CD4-positive, alpha-beta memory T cell (primary cell): ENCODE measurements at regions of chr7 and their contacts with region 1.

Region 1: DNA sequence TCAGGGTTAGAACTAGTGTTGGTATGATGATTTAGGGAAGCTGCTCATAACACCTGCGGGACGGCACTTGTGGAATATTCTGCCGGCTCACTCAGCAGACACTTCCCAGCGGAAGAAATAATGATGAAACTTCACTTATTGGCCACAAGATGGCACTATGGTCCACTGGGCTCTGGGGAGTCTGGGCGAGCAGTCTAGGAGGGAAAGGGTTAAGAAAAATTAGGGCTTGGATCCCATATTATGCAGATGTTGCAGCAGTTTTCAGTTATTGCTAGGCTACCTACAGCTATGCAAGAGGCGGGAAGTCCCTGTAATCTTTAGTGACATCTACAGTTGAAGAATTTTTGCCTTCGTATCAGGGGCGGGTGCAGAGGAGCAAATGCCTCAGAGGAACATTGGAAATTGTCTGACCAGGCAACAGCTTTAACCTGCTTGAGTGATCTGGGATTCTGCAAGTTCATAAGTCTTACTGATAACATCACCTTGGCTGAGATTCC is 238.7 kb upstream of the PRSS58 start:
- DNase-seq: peak; percentile 33 to 46 (median 36)
- H3K4me3 ChIP-seq: no peak overlapping the region
- H3K4me3 Mint-ChIP-seq: peak overlapping the region; percentile 40 to 75 (median 66)
- H3K27ac ChIP-seq: no peak overlapping the region
- H3K27ac Mint-ChIP-seq: peak overlapping the region; percentile 39 to 86 (median 74)
- H3K4me1 ChIP-seq: peaks cover 30% of the 10 kb centered on the region
- H3K4me1 Mint-ChIP-seq: peaks cover 24 to 51% (median 30%) of the 10 kb centered on the region in 4 donors
- H3K27me3 ChIP-seq: no peaks in the 10 kb centered on the region
- H3K27me3 Mint-ChIP-seq: no peaks in the 10 kb centered on the region

Region 2: GRCh38 chr7:140902303-140902953 is 1594.2 kb before region 1 on chr7:
- CTCF ChIA-PET with region 1: no interaction called
- POLR2A ChIA-PET with region 1: no interaction called
- intact Hi-C with region 1: no loop called
- DNase-seq: peak in 4 of 5 donors; percentile 36 to 50 (median 42)
- H3K4me3 ChIP-seq: no peak overlapping the region
- H3K4me3 Mint-ChIP-seq: peak overlapping the region; percentile 43 to 70 (median 58)
- H3K27ac ChIP-seq: no peak overlapping the region
- H3K27ac Mint-ChIP-seq: peak overlapping the region; percentile 59 to 89 (median 81)
- H3K4me1 ChIP-seq: peaks cover 36% of the 10 kb centered on the region
- H3K4me1 Mint-ChIP-seq: peaks cover 32 to 75% (median 54%) of the 10 kb centered on the region in 4 donors
- H3K27me3 ChIP-seq: no peaks in the 10 kb centered on the region
- H3K27me3 Mint-ChIP-seq: no peaks in the 10 kb centered on the region

Region 3: DNA sequence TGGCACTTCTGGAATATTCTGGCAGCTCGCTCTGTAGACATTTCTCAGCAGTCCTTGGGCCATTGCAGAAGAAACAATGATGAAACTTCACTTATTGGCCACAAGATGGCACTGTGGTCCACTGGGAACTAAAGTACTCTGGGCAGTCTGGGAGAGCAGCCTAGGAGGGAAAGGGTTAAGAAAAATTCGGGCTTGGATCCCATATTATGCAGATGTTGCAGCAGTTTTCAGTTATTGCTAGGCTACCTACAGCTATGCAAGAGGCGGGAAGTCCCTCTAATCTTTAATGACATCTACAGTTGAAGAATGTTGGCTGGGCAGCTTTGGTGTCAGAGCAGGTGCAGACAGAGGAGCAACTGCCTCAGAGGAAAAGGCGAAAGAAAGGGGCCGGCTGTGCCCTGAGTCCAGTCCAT is 37.0 kb before region 1 on chr7:
- CTCF ChIA-PET with region 1: interaction called, 775 read pairs
- POLR2A ChIA-PET with region 1: interaction called, 6 read pairs
- intact Hi-C with region 1: loop called (anchors 1 kb)
- DNase-seq: peak in 4 of 5 donors; percentile 30 to 39 (median 34)
- H3K4me3 ChIP-seq: no peak overlapping the region
- H3K4me3 Mint-ChIP-seq: peak overlapping the region in 7 of 8 donors; percentile 2 to 69 (median 29)
- H3K27ac ChIP-seq: no peak overlapping the region
- H3K27ac Mint-ChIP-seq: peak overlapping the region in 6 of 7 donors; percentile 34 to 83 (median 58)
- H3K4me1 ChIP-seq: peaks cover 46% of the 10 kb centered on the region
- H3K4me1 Mint-ChIP-seq: peaks cover 35 to 68% (median 53%) of the 10 kb centered on the region in 4 donors
- H3K27me3 ChIP-seq: no peaks in the 10 kb centered on the region
- H3K27me3 Mint-ChIP-seq: no peaks in the 10 kb centered on the region

Region 4: GRCh38 chr7:142508258-142508689 is 11.7 kb after region 1 on chr7:
- CTCF ChIA-PET with region 1: interaction called, 6 read pairs
- POLR2A ChIA-PET with region 1: interaction called, 4 read pairs
- intact Hi-C with region 1: loop called (anchors 1 kb)
- DNase-seq: peak; percentile 15 to 62 (median 19)
- H3K4me3 ChIP-seq: no peak overlapping the region
- H3K4me3 Mint-ChIP-seq: peak overlapping the region in 7 of 8 donors; percentile 4 to 65 (median 51)
- H3K27ac ChIP-seq: no peak overlapping the region
- H3K27ac Mint-ChIP-seq: peak overlapping the region; percentile 50 to 94 (median 83)
- H3K4me1 ChIP-seq: peaks cover 31% of the 10 kb centered on the region
- H3K4me1 Mint-ChIP-seq: peaks cover 10 to 44% (median 27%) of the 10 kb centered on the region in 4 donors
- H3K27me3 ChIP-seq: no peaks in the 10 kb centered on the region
- H3K27me3 Mint-ChIP-seq: no peaks in the 10 kb centered on the region

Region 5: GRCh38 chr7:142516038-142516501 is 19.5 kb after region 1 on chr7:
- CTCF ChIA-PET with region 1: interaction called, 42 read pairs
- POLR2A ChIA-PET with region 1: interaction called, 4 read pairs
- intact Hi-C with region 1: loop called (anchors 2 kb)
- DNase-seq: peak in 4 of 5 donors; percentile 33 to 46 (median 44)
- H3K4me3 ChIP-seq: no peak overlapping the region
- H3K4me3 Mint-ChIP-seq: peak overlapping the region in 4 of 8 donors; percentile 18 to 75 (median 30)
- H3K27ac ChIP-seq: no peak overlapping the region
- H3K27ac Mint-ChIP-seq: peak overlapping the region in 3 of 7 donors; percentile 9 to 67 (median 57)
- H3K4me1 ChIP-seq: peaks cover 34% of the 10 kb centered on the region
- H3K4me1 Mint-ChIP-seq: peaks cover 12 to 50% (median 29%) of the 10 kb centered on the region in 4 donors
- H3K27me3 ChIP-seq: no peaks in the 10 kb centered on the region
- H3K27me3 Mint-ChIP-seq: no peaks in the 10 kb centered on the region

Region 6: DNA sequence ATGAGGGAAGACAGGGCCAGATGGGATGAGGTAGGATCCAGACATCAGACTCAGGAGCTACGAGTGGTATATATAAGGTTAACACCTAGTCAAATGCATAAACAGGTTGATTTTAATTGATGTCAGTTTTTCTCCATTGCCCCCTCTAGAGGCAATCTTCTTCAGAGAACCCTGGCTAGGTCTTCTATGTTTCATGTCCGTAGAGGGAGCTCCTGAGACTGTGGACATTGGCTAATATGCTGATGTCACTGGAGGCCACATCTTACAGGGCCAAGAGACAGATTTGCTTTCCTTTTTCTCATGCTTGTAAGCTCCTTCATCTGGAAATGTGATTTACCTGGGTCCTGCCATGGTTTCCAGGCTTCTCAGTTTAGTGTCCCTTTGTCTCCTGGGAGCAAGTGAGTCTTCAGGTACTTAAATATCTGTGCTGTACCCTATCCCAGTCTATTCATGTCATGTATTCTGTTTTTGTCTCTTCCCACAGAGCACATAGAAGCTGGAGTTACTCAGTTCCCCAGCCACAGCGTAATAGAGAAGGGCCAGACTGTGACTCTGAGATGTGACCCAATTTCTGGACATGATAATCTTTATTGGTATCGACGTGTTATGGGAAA is 91.1 kb after region 1 on chr7:
- CTCF ChIA-PET with region 1: interaction called, 6 read pairs
- POLR2A ChIA-PET with region 1: no interaction called
- intact Hi-C with region 1: loop called (anchors 10 kb)
- DNase-seq: peak in 4 of 5 donors; percentile 25 to 35 (median 31)
- H3K4me3 ChIP-seq: no peak overlapping the region
- H3K4me3 Mint-ChIP-seq: peak overlapping the region in 4 of 8 donors; percentile 31 to 61 (median 44)
- H3K27ac ChIP-seq: no peak overlapping the region
- H3K27ac Mint-ChIP-seq: peak overlapping the region in 2 of 7 donors; percentile 12 to 21
- H3K4me1 ChIP-seq: no peaks in the 10 kb centered on the region
- H3K4me1 Mint-ChIP-seq: peaks cover 3 to 7% (median 4%) of the 10 kb centered on the region in 4 donors
- H3K27me3 ChIP-seq: no peaks in the 10 kb centered on the region
- H3K27me3 Mint-ChIP-seq: no peaks in the 10 kb centered on the region